Kidney (tissue), 22 donors: ENCODE measurements at regions of chr13 and their contacts with region 1.

Region 1: DNA sequence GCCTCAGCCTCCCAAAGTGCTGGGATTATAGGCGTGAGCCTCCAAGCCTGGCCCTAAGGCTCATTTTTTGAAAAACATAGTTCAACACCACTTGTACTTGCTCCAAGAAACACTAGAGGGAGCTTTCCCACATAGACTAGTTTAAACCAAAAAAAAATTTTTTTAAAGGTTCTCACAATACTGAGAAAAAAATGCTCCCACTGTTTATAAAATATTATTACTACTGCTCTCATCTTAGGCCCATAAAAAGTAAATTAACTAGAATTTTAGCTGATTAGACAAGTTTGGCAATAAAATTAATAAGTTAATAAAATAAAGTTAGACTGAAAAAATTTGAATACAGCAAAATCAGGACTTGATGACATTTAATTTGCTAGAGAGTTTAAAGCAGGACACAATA is 109.5 kb downstream of the TBC1D4 start:
- DNase-seq: peak in 2 of 5 donors; percentile 65 to 82
- H3K4me3 ChIP-seq: no peak overlapping the region
- H3K27ac ChIP-seq: no peak overlapping the region
- H3K4me1 ChIP-seq: peaks cover 0 to 20% (median 4%) of the 10 kb centered on the region in 3 donors
- H3K27me3 ChIP-seq: no peaks in the 10 kb centered on the region
- CTCF ChIP-seq: peak; percentile 66

Region 2: GRCh38 chr13:75482070-75482819 is 109.7 kb after region 1 on chr13 and contains the start of gene TBC1D4:
- intact Hi-C with region 1: loop called (anchors 10 kb)
- DNase-seq: peak; percentile 93 to 97 (median 96)
- H3K4me3 ChIP-seq: peak within 1 kb of the TSS; percentile 66 to 82 (median 72)
- H3K27ac ChIP-seq: peak within 1 kb of the TSS; percentile 81 to 85
- H3K4me1 ChIP-seq: no peaks in the 10 kb centered on the region
- H3K27me3 ChIP-seq: no peaks in the 10 kb centered on the region
- CTCF ChIP-seq: peak; percentile 72
- total RNA-seq, gene TBC1D4: 51.8 TPM

Region 3: GRCh38 chr13:75566658-75567057 is 194.1 kb after region 1 on chr13:
- intact Hi-C with region 1: no loop called
- DNase-seq: peak in 2 of 5 donors; percentile 30 to 39
- H3K4me3 ChIP-seq: no peak overlapping the region
- H3K27ac ChIP-seq: no peak overlapping the region
- H3K4me1 ChIP-seq: no peaks in the 10 kb centered on the region
- H3K27me3 ChIP-seq: no peaks in the 10 kb centered on the region
- CTCF ChIP-seq: no peak